ENCODE measurements at regions of chr21 and their contacts with region 1.

Region 1: DNA sequence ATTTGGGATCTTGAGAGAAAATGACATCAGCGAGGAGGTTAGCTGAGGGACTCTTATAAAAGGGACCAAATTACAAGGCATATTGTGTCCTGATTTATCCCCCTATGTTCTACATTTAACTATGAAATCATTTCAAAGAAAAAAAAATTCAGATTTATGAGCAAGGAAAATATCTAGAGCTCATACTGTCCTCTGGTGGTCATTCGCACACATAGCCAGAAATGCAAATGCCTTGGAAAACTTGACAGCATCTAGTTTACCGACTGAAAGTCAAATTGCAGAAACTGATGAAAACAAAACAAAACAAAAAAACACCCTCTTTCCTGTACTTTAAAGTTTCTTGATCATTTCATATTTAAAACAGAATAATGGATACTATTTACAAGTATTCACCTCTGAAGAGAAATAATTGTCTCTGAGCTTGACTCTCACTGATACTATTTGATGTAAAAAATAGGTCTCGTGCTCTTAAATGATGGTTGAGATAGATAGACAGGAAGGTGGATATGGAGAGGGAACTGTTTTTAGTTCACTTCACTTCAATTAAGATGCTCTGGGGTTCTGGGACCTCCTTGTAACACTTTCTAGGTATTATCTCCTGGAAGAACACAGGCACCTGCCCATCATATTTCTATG is 253.8 kb downstream of the PCP4 start:
- DNase-seq: no peak
- H3K4me3 ChIP-seq: no peak overlapping the region
- H3K27ac ChIP-seq: peak overlapping the region in 2 of 4 donors; percentile 20 to 39
- H3K4me1 ChIP-seq: peaks cover 0 to 7% (median 2%) of the 10 kb centered on the region in 4 donors
- H3K27me3 ChIP-seq: no peaks in the 10 kb centered on the region
- CTCF ChIP-seq: peak; percentile 88 to 97 (median 93)
- EP300 ChIP-seq: no peak
- POLR2A ChIP-seq: no peak

Region 2: DNA sequence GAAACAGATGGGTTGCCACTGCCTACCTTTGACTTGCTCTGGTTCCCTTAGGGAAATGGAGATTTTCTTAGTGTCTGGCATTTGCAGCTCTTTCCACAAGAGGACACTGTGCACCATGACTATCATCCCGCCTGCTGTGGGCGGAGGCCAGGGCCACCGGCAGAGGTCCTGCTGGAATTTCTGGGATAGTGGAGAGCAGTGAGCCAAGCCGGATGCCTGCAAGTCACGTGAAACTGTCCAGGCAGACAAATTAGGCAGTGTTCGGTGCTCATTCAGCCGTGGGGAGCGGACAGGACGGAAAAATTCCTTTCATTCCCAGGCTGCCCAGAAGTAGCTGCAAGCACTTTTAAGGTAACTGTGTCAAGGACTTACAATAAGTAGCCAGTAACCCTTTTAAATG is 332.7 kb before region 1 on chr21:
- intact Hi-C with region 1: loop called (anchors 1 kb)
- DNase-seq: peak; percentile 79
- H3K4me3 ChIP-seq: peak overlapping the region in 1 of 4 donors; percentile 10
- H3K27ac ChIP-seq: peak overlapping the region in 3 of 4 donors; percentile 57 to 73 (median 66)
- H3K4me1 ChIP-seq: peaks cover 0 to 17% (median 8%) of the 10 kb centered on the region in 4 donors
- H3K27me3 ChIP-seq: no peaks in the 10 kb centered on the region
- CTCF ChIP-seq: peak; percentile 72 to 92 (median 85)
- EP300 ChIP-seq: no peak
- POLR2A ChIP-seq: no peak

Region 3: DNA sequence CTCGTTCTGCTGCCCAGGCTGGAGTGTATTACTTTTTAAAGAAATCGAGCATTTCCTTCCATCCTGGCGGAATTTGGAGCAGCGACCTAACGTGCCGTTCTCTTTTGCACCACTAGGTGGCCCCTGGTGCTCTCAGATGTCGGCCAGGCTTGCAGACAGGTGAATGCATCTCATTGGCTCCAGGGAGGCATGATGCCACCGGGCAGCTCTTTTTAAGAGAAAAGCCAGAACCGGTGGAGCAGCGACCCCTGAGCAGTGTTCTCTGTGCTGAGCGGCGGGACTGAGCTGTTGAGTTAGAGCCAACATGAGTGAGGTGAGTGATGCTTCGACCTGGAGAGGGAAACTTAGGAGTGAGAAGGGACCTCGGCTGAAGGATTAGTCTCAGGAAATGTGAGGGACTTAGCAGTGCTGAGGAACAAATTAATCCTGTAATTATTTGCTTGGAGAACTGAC is 253.8 kb before region 1 on chr21 and contains the start of gene PCP4:
- intact Hi-C with region 1: loop called (anchors 1 kb)
- DNase-seq: peak; percentile 83
- H3K4me3 ChIP-seq: peak within 1 kb of the TSS; percentile 27 to 42 (median 40)
- H3K27ac ChIP-seq: peak within 1 kb of the TSS; percentile 44 to 74 (median 69)
- H3K4me1 ChIP-seq: peaks cover 0 to 13% (median 0%) of the 10 kb centered on the region in 4 donors
- H3K27me3 ChIP-seq: no peaks in the 10 kb centered on the region
- CTCF ChIP-seq: peak; percentile 53 to 85 (median 80)
- EP300 ChIP-seq: no peak
- POLR2A ChIP-seq: no peak
- total RNA-seq, gene PCP4: 88.8 to 198 (median 172) TPM

Region 4: GRCh38 chr21:40043431-40043830 is 77.6 kb before region 1 on chr21:
- intact Hi-C with region 1: loop called (anchors 5 kb)
- DNase-seq: no peak
- H3K4me3 ChIP-seq: no peak overlapping the region
- H3K27ac ChIP-seq: no peak overlapping the region
- H3K4me1 ChIP-seq: peaks cover 0 to 21% (median 18%) of the 10 kb centered on the region in 4 donors
- H3K27me3 ChIP-seq: no peaks in the 10 kb centered on the region
- CTCF ChIP-seq: no peak
- EP300 ChIP-seq: no peak
- POLR2A ChIP-seq: no peak

Region 5: GRCh38 chr21:40070883-40071282 is 50.2 kb before region 1 on chr21:
- intact Hi-C with region 1: loop called (anchors 5 kb)
- DNase-seq: peak; percentile 76
- H3K4me3 ChIP-seq: no peak overlapping the region
- H3K27ac ChIP-seq: peak overlapping the region in 3 of 4 donors; percentile 66 to 77 (median 73)
- H3K4me1 ChIP-seq: peaks cover 0 to 55% (median 39%) of the 10 kb centered on the region in 4 donors
- H3K27me3 ChIP-seq: no peaks in the 10 kb centered on the region
- CTCF ChIP-seq: no peak
- EP300 ChIP-seq: peak; percentile 60 to 91 (median 84)
- POLR2A ChIP-seq: no peak

Measured in sigmoid colon (tissue), 7 donors.